Activated CD4-positive, alpha-beta T cell treated with anti-CD3 and anti-CD28 coated beads for 36 hours (primary cell): ENCODE measurements at regions of chr4 and their contacts with region 1.

Region 1: GRCh38 chr4:182143822-182144625 is 99.2 kb upstream of the TENM3 start:
- DNase-seq: peak; percentile 17
- ATAC-seq: peak; percentile 30
- H3K4me3 Mint-ChIP-seq: peak overlapping the region; percentile 55
- H3K27ac Mint-ChIP-seq: no peak overlapping the region
- H3K4me1 Mint-ChIP-seq: peaks cover 15% of the 10 kb centered on the region
- H3K27me3 Mint-ChIP-seq: peaks cover 59% of the 10 kb centered on the region

Region 2: DNA sequence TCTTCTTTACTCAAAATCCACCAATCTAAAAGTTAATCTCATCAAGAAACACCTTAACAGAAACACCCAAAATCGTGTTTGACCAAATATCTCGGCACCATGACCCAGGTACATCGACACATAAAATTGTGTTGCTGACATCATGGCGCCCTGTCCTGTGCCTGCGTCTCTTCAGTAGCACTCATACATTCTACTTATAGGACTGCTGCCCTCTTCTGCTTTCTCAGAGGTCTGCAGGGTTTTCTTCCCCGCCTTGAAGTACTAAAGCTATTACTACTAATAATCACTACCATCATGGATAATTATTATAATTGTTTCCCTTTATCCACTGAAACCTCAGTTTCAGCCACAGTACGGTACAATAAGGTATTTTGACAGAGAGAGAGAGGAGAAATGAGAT is 1303.9 kb before region 1 on chr4:
- CTCF ChIA-PET with region 1: no interaction called
- POLR2A ChIA-PET with region 1: no interaction called
- intact Hi-C with region 1: no loop called
- DNase-seq: no peak
- ATAC-seq: no peak
- H3K4me3 Mint-ChIP-seq: no peak overlapping the region
- H3K27ac Mint-ChIP-seq: no peak overlapping the region
- H3K4me1 Mint-ChIP-seq: no peaks in the 10 kb centered on the region
- H3K27me3 Mint-ChIP-seq: no peaks in the 10 kb centered on the region

Region 3: DNA sequence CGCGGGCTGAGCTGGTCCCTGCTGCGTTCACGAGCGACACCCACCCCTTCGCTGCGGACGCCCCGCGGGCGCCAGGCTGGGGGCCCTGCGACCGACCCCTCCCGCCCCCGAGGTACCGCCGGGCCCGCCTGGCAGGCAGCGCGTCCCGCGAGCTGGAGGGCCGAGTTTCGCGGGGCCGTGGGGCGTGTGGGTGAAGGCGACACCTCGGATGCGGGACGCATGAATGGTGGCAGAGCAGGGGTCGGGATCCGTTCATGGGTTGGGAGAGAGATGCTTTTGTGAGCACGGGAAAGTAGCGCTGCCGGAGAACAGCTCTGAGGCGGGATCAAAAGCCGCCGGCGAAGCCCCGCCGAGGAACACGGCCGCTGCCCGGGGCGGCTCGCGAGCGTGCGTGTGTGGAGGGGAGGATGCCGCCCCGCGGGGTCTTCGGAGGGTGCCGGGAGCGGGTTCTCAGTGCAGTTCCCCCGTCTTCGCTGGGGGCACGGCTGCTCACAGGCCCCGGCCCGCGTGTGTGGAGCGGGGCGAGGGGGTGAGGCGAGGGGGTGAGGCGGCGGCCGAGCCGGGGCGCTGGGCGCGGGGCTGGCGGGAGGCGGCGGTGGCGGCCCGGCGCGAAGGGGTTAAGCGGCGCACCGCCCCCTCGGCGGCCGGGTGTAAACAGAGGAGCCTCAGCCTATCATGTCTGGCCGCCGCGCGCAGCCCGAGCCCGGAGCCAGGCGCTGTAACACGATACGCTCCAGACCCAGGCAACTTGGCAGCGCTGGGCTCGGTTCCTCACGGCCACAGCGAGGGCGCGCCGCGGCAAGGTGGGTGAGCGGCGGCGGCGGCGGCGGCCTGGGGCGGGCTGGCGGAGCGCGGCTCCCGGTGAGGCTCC is 304.5 kb after region 1 on chr4:
- CTCF ChIA-PET with region 1: no interaction called
- POLR2A ChIA-PET with region 1: no interaction called
- intact Hi-C with region 1: loop called in 1 of 2 experiments (anchors 10 kb)
- DNase-seq: peak; percentile 65
- ATAC-seq: peak; percentile 92
- H3K4me3 Mint-ChIP-seq: peak overlapping the region; percentile 64
- H3K27ac Mint-ChIP-seq: no peak overlapping the region
- H3K4me1 Mint-ChIP-seq: peaks cover 16% of the 10 kb centered on the region
- H3K27me3 Mint-ChIP-seq: peaks cover 55% of the 10 kb centered on the region

Region 4: DNA sequence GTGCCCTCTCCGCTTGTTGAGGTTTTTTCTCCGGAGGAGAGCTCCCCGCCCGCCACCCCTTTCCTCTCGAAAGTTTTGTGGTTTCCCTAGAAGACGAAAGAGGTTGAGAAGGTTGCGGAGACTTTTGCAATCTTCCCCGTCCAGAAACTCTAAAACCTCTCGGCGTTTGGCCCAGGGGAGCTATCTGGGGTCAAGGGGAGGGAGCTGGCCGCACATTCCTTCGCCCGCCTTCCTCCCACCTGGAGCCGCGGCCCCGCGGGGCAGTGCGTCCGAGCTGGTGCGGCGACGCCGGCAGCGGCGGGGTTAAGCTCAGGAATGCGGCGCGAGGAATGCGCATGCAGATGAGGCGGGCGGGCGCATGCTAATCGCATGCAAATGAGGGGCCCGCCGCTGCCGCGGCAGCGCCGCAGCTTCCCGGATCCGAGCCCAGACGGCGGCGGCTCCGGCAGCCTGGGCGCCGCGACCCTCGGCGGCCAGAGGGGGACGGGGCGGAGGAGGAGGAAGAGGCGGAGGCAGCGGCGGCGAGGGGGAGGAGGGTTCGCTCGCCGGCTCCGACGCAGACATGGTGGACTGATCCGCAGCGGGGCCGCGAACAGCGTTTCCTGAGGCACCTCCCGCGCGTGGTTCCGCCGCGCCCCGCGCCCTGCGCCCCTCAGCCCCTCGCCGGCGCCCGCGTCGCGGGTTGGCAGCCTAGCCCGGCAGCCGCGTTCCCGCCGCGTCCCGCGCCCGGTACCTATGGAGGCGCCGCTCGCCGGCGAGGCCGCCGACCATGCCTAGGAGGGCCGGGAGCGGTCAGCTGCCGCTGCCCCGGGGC is 954.9 kb after region 1 on chr4 and contains the start of gene WWC2:
- CTCF ChIA-PET with region 1: no interaction called
- POLR2A ChIA-PET with region 1: no interaction called
- intact Hi-C with region 1: loop called in 1 of 2 experiments (anchors 5 kb)
- DNase-seq: peak; percentile 75
- ATAC-seq: peak; percentile 75
- H3K4me3 Mint-ChIP-seq: peak within 1 kb of the TSS; percentile 59
- H3K27ac Mint-ChIP-seq: no peak within 1 kb of the TSS
- H3K4me1 Mint-ChIP-seq: peaks cover 5% of the 10 kb centered on the region
- H3K27me3 Mint-ChIP-seq: peaks cover 33% of the 10 kb centered on the region
- total RNA-seq, gene WWC2: 3.6 to 4.3 TPM